Panc1 (cell line): ENCODE measurements at regions of chrX and their contacts with region 1.

Region 1: DNA sequence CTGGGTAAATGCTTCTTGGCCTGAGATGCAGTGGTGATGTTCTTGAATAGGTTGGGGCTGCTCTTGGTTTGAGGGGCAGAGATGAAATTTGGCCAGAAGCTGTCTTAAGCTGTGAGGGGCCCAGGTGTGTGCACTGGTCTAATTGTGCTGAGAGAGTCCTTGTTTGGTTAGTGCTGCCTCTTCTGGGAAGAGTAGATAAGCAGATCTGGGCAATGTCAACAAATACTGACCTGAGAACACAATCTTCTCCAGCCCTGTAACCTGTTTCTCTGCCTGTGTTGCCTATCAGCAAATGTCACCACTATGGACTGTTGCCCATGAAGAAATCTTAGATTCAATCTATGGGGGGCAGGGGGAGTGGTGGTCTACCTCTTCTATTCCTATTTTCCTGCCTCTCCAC is 17.2 kb upstream of the USP27X start:
- DNase-seq: no peak
- ATAC-seq: no peak
- H3K4me3 ChIP-seq: no peak overlapping the region
- H3K27ac ChIP-seq: no peak overlapping the region
- H3K4me1 ChIP-seq: no peaks in the 10 kb centered on the region
- H3K27me3 ChIP-seq: no peaks in the 10 kb centered on the region; the same call in 1 of the 2 replicates
- CTCF ChIP-seq: no peak

Region 2: GRCh38 chrX:50333308-50333707 is 471.2 kb after region 1 on chrX:
- CTCF ChIA-PET with region 1: interaction called, 12 read pairs
- POLR2A ChIA-PET with region 1: no interaction called
- in situ Hi-C with region 1: no loop called
- intact Hi-C with region 1: no loop called
- DNase-seq: no peak
- ATAC-seq: no peak
- H3K4me3 ChIP-seq: no peak overlapping the region
- H3K27ac ChIP-seq: no peak overlapping the region
- H3K4me1 ChIP-seq: no peaks in the 10 kb centered on the region
- H3K27me3 ChIP-seq: no peaks in the 10 kb centered on the region
- CTCF ChIP-seq: no peak